ENCODE measurements at regions of chr16 and their contacts with region 1.

Region 1: GRCh38 chr16:87765776-87766484 is at the start of gene KLHDC4:
- DNase-seq: peak; percentile 92
- H3K4me3 ChIP-seq: peak within 1 kb of the TSS; percentile 96
- H3K27ac ChIP-seq: peak within 1 kb of the TSS; percentile 94
- H3K4me1 ChIP-seq: peaks cover 7% of the 10 kb centered on the region
- H3K27me3 ChIP-seq: no peaks in the 10 kb centered on the region
- CTCF ChIP-seq: no peak
- total RNA-seq, gene KLHDC4: 83.3 and 86.6 TPM in 2 replicates

Region 2: GRCh38 chr16:87407511-87408112 is 358.3 kb before region 1 on chr16:
- CTCF ChIA-PET with region 1: no interaction called
- POLR2A ChIA-PET with region 1: no interaction called
- intact Hi-C with region 1: loop called (anchors 10 kb)
- DNase-seq: no peak
- H3K4me3 ChIP-seq: no peak overlapping the region
- H3K27ac ChIP-seq: no peak overlapping the region
- H3K4me1 ChIP-seq: no peaks in the 10 kb centered on the region
- H3K27me3 ChIP-seq: no peaks in the 10 kb centered on the region
- CTCF ChIP-seq: no peak

Region 3: DNA sequence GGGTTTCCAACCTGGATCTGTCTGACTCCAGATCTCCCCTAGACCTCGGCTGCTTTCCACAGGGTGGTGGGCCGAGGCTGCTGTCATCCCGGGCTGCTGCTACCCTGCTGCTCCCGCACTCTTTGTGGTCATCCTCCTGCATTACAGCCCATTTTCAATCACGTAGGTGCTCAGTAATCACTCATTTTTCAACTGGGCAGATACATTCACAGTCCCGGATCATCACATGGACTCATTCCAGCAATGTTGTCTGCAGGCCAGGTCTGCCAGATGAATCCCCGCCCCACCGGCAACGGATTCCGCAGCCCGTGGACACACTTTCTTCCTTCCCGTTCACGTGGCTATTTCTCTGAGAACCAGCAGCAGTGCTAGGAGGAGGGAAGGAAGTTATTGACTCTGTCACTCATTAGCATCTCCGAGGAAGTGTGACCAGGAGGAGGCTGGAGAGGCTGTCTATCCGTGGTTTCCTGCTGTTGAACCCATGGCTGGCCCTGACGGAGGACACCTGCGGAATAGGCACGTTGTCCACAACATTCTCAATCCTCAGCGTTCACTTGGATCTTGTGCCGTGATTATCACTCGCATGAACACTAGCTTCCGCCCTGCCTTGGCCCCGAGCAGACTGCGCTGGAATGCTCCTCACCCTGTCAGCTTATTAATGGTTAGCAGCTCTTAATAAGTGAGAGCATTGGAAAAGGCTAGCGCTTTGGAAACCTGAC is 258.4 kb before region 1 on chr16:
- CTCF ChIA-PET with region 1: no interaction called
- POLR2A ChIA-PET with region 1: no interaction called
- intact Hi-C with region 1: no loop called
- DNase-seq: no peak
- H3K4me3 ChIP-seq: no peak overlapping the region
- H3K27ac ChIP-seq: no peak overlapping the region
- H3K4me1 ChIP-seq: no peaks in the 10 kb centered on the region
- H3K27me3 ChIP-seq: no peaks in the 10 kb centered on the region
- CTCF ChIP-seq: no peak

Region 4: DNA sequence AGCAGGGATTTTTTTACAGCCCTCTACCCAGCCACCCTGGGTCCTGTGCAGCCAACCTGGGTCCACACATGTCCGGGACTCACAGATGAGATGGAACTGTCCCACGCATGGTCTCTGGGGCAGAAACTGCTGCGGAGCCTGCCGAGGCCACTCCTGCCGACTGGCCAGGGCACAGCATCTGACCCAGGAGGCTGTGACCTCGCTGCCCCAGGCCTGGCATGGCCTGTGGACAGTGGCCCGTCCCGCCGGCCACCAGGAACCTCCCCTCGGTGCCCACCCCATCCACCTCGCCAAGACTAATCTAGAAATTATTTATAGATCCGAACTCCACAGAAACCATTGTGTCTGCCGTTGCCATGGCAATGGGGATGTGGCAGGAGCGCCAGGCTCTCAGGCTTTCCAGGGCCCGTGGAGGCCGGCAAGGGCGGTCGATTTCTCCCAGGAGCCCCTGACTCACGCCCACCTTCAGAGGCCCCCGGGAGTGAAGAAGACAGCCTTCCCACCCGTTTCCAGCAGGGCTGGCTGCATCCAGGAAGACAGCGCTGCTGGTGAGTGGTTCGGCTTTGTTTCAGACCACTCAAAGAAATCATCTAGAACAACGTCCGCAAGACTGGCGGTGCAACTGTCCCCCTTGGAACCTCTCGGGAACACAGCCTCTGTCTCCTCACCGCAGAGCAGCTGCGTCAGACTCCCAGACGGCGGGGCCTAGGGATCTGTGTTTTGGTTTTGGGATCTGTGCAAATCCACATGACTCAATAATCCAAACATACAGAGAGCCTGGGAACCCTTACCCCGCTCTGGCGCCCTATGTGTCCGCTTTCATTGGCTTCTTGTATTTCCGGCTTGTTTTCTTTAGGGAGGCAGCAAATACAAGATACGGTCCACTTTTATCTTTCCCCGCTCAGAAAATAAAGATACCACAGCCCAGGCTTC is 224.7 kb before region 1 on chr16:
- CTCF ChIA-PET with region 1: no interaction called
- POLR2A ChIA-PET with region 1: interaction called, 15 read pairs
- intact Hi-C with region 1: no loop called
- DNase-seq: peak; percentile 54
- H3K4me3 ChIP-seq: peak overlapping the region; percentile 30
- H3K27ac ChIP-seq: no peak overlapping the region
- H3K4me1 ChIP-seq: peaks cover 5% of the 10 kb centered on the region
- H3K27me3 ChIP-seq: peaks cover 21% of the 10 kb centered on the region
- CTCF ChIP-seq: no peak

Region 5: DNA sequence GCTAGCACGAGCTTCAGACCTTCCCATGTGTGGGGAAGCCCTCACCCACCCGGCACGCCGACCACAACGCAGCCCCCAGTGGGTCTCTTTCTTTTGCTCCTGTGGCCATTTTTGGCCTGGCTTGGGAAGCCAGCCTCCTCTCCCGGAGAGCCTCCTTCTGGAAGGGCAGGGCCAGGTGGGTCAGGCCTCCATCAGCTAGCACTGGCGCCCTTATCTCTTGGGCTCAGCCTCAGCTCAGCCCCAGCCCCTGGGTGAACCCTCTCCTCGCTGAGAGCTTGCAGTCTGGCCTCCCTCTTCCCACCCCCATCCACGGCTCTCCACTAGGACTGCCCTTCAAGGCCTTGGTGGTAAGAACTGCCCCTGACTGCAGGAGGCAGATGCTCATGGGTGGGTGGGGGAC is 178.3 kb before region 1 on chr16:
- CTCF ChIA-PET with region 1: interaction called, 13 read pairs
- POLR2A ChIA-PET with region 1: no interaction called
- intact Hi-C with region 1: loop called (anchors 2 kb)
- DNase-seq: no peak
- H3K4me3 ChIP-seq: no peak overlapping the region
- H3K27ac ChIP-seq: no peak overlapping the region
- H3K4me1 ChIP-seq: peaks cover 5% of the 10 kb centered on the region
- H3K27me3 ChIP-seq: peaks cover 4% of the 10 kb centered on the region
- CTCF ChIP-seq: no peak

Region 6: GRCh38 chr16:88569985-88570690 is 804.2 kb after region 1 on chr16 and contains the start of gene ZC3H18:
- CTCF ChIA-PET with region 1: no interaction called
- POLR2A ChIA-PET with region 1: no interaction called
- intact Hi-C with region 1: loop called (anchors 5 kb)
- DNase-seq: peak; percentile 98
- H3K4me3 ChIP-seq: peak within 1 kb of the TSS; percentile 91
- H3K27ac ChIP-seq: peak within 1 kb of the TSS; percentile 91
- H3K4me1 ChIP-seq: peaks cover 13% of the 10 kb centered on the region
- H3K27me3 ChIP-seq: no peaks in the 10 kb centered on the region
- CTCF ChIP-seq: no peak
- total RNA-seq, gene ZC3H18: 75.9 and 83.4 TPM in 2 replicates